CD8-positive, alpha-beta T cell (primary cell): ENCODE measurements at regions of chr15 and their contacts with region 1.

Region 1: GRCh38 chr15:28935326-28935725 is 49.6 kb downstream of the APBA2 start:
- DNase-seq: peak; percentile 35 to 82 (median 72)
- ATAC-seq: peak; percentile 67
- H3K4me3 ChIP-seq: peak overlapping the region in 1 of 2 experiments; percentile 13
- H3K4me3 Mint-ChIP-seq: peak overlapping the region; percentile 63
- H3K27ac ChIP-seq: peak overlapping the region in 1 of 2 experiments; percentile 81
- H3K27ac Mint-ChIP-seq: peak overlapping the region; percentile 96
- H3K4me1 ChIP-seq: peaks cover 70% of the 10 kb centered on the region
- H3K4me1 Mint-ChIP-seq: peaks cover 89% of the 10 kb centered on the region
- H3K27me3 ChIP-seq: no peaks in the 10 kb centered on the region
- H3K27me3 Mint-ChIP-seq: no peaks in the 10 kb centered on the region
- CTCF ChIP-seq: peak; percentile 61

Region 2: GRCh38 chr15:28885630-28886430 is 49.5 kb before region 1 on chr15 and contains the start of gene APBA2:
- CTCF ChIA-PET with region 1: interaction called, 11 read pairs
- POLR2A ChIA-PET with region 1: interaction called, 3 read pairs
- intact Hi-C with region 1: loop called (anchors 1 to 5 kb)
- DNase-seq: peak; percentile 9 to 79 (median 60)
- ATAC-seq: peak; percentile 59
- H3K4me3 ChIP-seq: peak within 1 kb of the TSS; percentile 75 to 76
- H3K4me3 Mint-ChIP-seq: peak within 1 kb of the TSS; percentile 91
- H3K27ac ChIP-seq: peak within 1 kb of the TSS; percentile 67 to 69
- H3K27ac Mint-ChIP-seq: peak within 1 kb of the TSS; percentile 99
- H3K4me1 ChIP-seq: peaks cover 44% of the 10 kb centered on the region
- H3K4me1 Mint-ChIP-seq: peaks cover 46% of the 10 kb centered on the region
- H3K27me3 ChIP-seq: no peaks in the 10 kb centered on the region
- H3K27me3 Mint-ChIP-seq: no peaks in the 10 kb centered on the region
- CTCF ChIP-seq: no peak
- total RNA-seq, gene APBA2: 106 to 108 TPM

Region 3: GRCh38 chr15:28913171-28913765 is 22.1 kb before region 1 on chr15:
- CTCF ChIA-PET with region 1: interaction called, 10 read pairs
- POLR2A ChIA-PET with region 1: no interaction called
- intact Hi-C with region 1: no loop called
- DNase-seq: no peak
- ATAC-seq: no peak
- H3K4me3 ChIP-seq: no peak overlapping the region
- H3K4me3 Mint-ChIP-seq: no peak overlapping the region
- H3K27ac ChIP-seq: no peak overlapping the region
- H3K27ac Mint-ChIP-seq: no peak overlapping the region
- H3K4me1 ChIP-seq: peaks cover 77% of the 10 kb centered on the region
- H3K4me1 Mint-ChIP-seq: peaks cover 62% of the 10 kb centered on the region
- H3K27me3 ChIP-seq: peaks cover 0 to 3% of the 10 kb centered on the region in 2 experiments
- H3K27me3 Mint-ChIP-seq: no peaks in the 10 kb centered on the region
- CTCF ChIP-seq: no peak

Region 4: DNA sequence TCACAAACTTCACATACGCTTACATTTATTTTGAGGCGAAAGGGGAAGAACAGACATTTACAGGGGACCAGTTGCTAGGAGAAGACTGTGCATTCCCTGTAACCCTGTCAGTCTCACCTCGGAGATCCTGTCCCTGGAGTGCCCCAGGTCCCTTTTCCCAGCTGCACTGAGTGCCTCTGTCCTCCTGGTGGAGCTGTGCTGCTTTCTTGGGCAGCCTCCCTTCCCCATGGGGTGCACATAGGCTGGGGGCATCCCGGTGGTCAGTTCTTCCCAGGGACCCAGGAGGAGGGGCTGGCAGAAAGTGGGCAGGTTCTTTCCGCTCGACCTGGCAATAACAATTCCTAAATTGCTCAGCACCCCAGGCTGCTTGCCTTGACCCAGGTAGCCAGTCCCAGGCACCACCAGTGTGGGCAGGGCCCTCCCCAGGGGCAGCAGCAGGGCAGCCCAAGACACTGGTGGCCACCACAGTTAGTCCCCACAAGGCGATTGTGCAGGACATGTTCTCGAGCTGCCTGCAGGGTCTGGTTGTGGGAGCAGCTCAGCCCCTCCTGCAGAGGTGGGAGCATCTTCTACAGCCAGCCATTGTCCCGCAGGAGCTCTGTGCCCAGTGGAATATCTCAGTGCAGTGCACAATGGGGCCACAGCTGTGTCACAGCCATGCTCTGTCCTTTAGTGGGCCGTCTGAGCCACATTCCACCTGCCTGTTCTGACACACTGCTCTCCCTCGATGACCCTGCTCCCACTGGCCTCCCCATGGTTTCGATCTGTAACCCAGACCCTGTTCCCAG is 13.2 kb before region 1 on chr15:
- CTCF ChIA-PET with region 1: interaction called, 31 read pairs
- POLR2A ChIA-PET with region 1: interaction called, 4 read pairs
- intact Hi-C with region 1: loop called in 1 of 2 experiments (anchors 2 kb)
- DNase-seq: peak in 1 of 9 experiments; percentile 30
- ATAC-seq: no peak
- H3K4me3 ChIP-seq: peak overlapping the region in 1 of 2 experiments; percentile 4
- H3K4me3 Mint-ChIP-seq: peak overlapping the region; percentile 79
- H3K27ac ChIP-seq: peak overlapping the region in 1 of 2 experiments; percentile 60
- H3K27ac Mint-ChIP-seq: peak overlapping the region; percentile 86
- H3K4me1 ChIP-seq: peaks cover 72% of the 10 kb centered on the region
- H3K4me1 Mint-ChIP-seq: peaks cover 81% of the 10 kb centered on the region
- H3K27me3 ChIP-seq: no peaks in the 10 kb centered on the region
- H3K27me3 Mint-ChIP-seq: no peaks in the 10 kb centered on the region
- CTCF ChIP-seq: no peak

Region 5: GRCh38 chr15:28948036-28948435 is 12.7 kb after region 1 on chr15:
- CTCF ChIA-PET with region 1: interaction called, 8 read pairs
- POLR2A ChIA-PET with region 1: interaction called, 5 read pairs
- intact Hi-C with region 1: loop called in 1 of 2 experiments (anchors 2 kb)
- DNase-seq: peak in 1 of 9 experiments; percentile 43
- ATAC-seq: no peak
- H3K4me3 ChIP-seq: peak overlapping the region; percentile 18 to 40
- H3K4me3 Mint-ChIP-seq: peak overlapping the region; percentile 84
- H3K27ac ChIP-seq: peak overlapping the region; percentile 59 to 67
- H3K27ac Mint-ChIP-seq: peak overlapping the region; percentile 98
- H3K4me1 ChIP-seq: peaks cover 86% of the 10 kb centered on the region
- H3K4me1 Mint-ChIP-seq: peaks cover 81% of the 10 kb centered on the region
- H3K27me3 ChIP-seq: no peaks in the 10 kb centered on the region
- H3K27me3 Mint-ChIP-seq: no peaks in the 10 kb centered on the region
- CTCF ChIP-seq: no peak

Region 6: DNA sequence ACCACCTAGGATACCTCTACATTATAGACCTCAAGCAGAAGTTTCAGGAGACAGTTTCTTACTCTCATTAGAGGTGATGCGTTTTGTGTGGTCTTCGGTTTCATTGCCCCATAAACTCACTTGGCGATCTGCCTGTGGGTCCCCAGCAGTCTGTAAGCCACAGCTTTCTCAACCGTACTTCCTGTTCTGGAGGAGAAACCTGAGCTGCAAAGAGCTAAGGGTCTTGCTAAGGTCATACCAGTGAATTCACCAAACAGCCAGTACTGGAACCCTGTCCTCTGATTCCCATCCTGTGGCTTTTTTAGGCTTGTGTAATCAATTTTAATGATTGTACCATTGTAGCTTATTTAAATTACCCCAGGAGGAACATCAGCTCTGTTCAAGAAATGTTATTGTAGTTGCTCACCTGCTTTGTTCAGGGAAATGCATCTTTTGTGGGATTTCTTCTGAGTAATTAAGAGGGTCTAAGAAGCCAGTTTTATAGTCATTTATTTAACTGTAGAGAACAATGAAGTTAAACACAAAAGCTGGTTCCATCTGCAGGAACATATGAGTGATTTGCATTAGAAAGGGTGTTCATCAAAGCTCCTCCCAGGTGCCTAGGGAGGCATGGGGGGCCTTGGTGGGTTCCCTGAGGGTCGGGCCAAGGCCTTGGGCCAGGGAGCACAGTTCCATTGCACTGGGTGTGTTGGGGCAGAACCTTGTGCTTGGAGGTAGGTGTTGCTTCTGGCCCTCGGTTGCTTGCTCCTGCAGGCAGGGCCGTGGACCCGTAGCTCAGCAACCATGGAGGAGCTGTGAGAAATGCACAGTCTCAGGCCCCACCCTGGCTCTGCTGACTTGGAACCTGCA is 20.1 kb after region 1 on chr15:
- CTCF ChIA-PET with region 1: interaction called, 7 read pairs
- POLR2A ChIA-PET with region 1: interaction called, 3 read pairs
- intact Hi-C with region 1: loop called (anchors 2 kb)
- DNase-seq: peak in 4 of 9 experiments; percentile 39 to 70 (median 58)
- ATAC-seq: peak; percentile 57
- H3K4me3 ChIP-seq: peak overlapping the region in 1 of 2 experiments; percentile 3
- H3K4me3 Mint-ChIP-seq: peak overlapping the region; percentile 72
- H3K27ac ChIP-seq: peak overlapping the region; percentile 31 to 58
- H3K27ac Mint-ChIP-seq: peak overlapping the region; percentile 96
- H3K4me1 ChIP-seq: peaks cover 76% of the 10 kb centered on the region
- H3K4me1 Mint-ChIP-seq: peaks cover 71% of the 10 kb centered on the region
- H3K27me3 ChIP-seq: no peaks in the 10 kb centered on the region
- H3K27me3 Mint-ChIP-seq: no peaks in the 10 kb centered on the region
- CTCF ChIP-seq: no peak